Common myeloid progenitor, CD34-positive (primary cell): ENCODE measurements at regions of chr3 and their contacts with region 1.

Region 1: GRCh38 chr3:46368569-46368968 is 2.2 kb upstream of the CCR5 start:
- DNase-seq: peak; percentile 61 to 82 (median 76)
- H3K4me3 ChIP-seq: no peak overlapping the region
- H3K27ac ChIP-seq: no peak overlapping the region
- H3K4me1 ChIP-seq: peaks cover 6 to 27% (median 16%) of the 10 kb centered on the region in 4 experiments
- H3K27me3 ChIP-seq: no peaks in the 10 kb centered on the region

Region 2: GRCh38 chr3:46208167-46208704 is 160.3 kb before region 1 on chr3 and contains the start of gene CCR1:
- CTCF ChIA-PET with region 1: interaction called, 87 read pairs
- POLR2A ChIA-PET with region 1: no interaction called
- DNase-seq: peak; percentile 53 to 91 (median 90)
- H3K4me3 ChIP-seq: peak within 1 kb of the TSS in 4 of 7 experiments; percentile 11 to 49 (median 30)
- H3K27ac ChIP-seq: no peak within 1 kb of the TSS
- H3K4me1 ChIP-seq: peaks cover 14 to 34% (median 26%) of the 10 kb centered on the region in 4 experiments
- H3K27me3 ChIP-seq: no peaks in the 10 kb centered on the region

Region 3: DNA sequence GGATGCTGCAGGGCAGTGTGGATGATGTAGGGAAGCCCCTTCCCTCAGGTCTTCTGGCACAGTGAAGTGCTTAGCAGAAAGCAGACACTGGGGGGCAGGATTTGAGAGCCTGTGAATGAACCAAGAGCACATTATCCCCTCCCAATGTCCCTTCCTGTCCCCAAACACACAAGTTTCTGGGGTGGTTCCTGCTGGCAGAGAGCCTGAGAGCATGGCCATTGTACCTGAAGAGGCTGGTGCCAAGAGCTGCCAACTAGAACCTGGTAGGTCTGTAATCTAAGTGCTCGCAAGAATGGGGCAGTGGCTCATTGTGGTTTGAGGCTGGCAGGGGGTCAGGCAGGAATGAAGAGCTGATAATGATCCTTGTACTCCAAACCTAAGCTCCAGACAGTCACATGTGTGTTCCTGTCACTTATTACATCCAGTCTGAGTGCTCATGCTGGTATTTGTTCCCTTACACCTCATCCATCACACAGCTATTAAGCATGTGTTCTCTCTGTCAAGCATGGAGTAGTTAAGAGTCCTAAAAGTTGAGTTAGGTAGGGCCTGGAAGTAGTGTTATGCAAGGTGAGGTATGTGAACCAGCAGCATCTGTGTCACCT is 153.7 kb before region 1 on chr3:
- CTCF ChIA-PET with region 1: interaction called, 87 read pairs
- POLR2A ChIA-PET with region 1: no interaction called
- DNase-seq: peak; percentile 35 to 46 (median 44)
- H3K4me3 ChIP-seq: no peak overlapping the region
- H3K27ac ChIP-seq: no peak overlapping the region
- H3K4me1 ChIP-seq: peaks cover 9 to 30% (median 19%) of the 10 kb centered on the region in 4 experiments
- H3K27me3 ChIP-seq: no peaks in the 10 kb centered on the region

Region 4: GRCh38 chr3:46276502-46277099 is 92.0 kb before region 1 on chr3:
- CTCF ChIA-PET with region 1: interaction called, 14 read pairs
- POLR2A ChIA-PET with region 1: no interaction called
- DNase-seq: peak; percentile 67 to 76 (median 73)
- H3K4me3 ChIP-seq: no peak overlapping the region
- H3K27ac ChIP-seq: no peak overlapping the region
- H3K4me1 ChIP-seq: peaks cover 0 to 12% (median 3%) of the 10 kb centered on the region in 4 experiments
- H3K27me3 ChIP-seq: no peaks in the 10 kb centered on the region

Region 5: GRCh38 chr3:46293991-46294833 is 74.4 kb before region 1 on chr3:
- CTCF ChIA-PET with region 1: interaction called, 37 read pairs
- POLR2A ChIA-PET with region 1: no interaction called
- DNase-seq: no peak
- H3K4me3 ChIP-seq: no peak overlapping the region
- H3K27ac ChIP-seq: no peak overlapping the region
- H3K4me1 ChIP-seq: peaks cover 0 to 31% (median 19%) of the 10 kb centered on the region in 4 experiments
- H3K27me3 ChIP-seq: no peaks in the 10 kb centered on the region

Region 6: GRCh38 chr3:46349485-46350261 is 18.9 kb before region 1 on chr3:
- CTCF ChIA-PET with region 1: interaction called, 44 read pairs
- POLR2A ChIA-PET with region 1: no interaction called
- DNase-seq: peak; percentile 48 to 86 (median 78)
- H3K4me3 ChIP-seq: peak overlapping the region in 4 of 7 experiments; percentile 12 to 46 (median 22)
- H3K27ac ChIP-seq: no peak overlapping the region
- H3K4me1 ChIP-seq: peaks cover 24 to 57% (median 46%) of the 10 kb centered on the region in 4 experiments
- H3K27me3 ChIP-seq: no peaks in the 10 kb centered on the region

Region 7: GRCh38 chr3:46449755-46450552 is 81.4 kb after region 1 on chr3:
- CTCF ChIA-PET with region 1: interaction called, 11 read pairs
- POLR2A ChIA-PET with region 1: no interaction called
- DNase-seq: no peak
- H3K4me3 ChIP-seq: no peak overlapping the region
- H3K27ac ChIP-seq: no peak overlapping the region
- H3K4me1 ChIP-seq: peaks cover 0 to 25% (median 0%) of the 10 kb centered on the region in 4 experiments
- H3K27me3 ChIP-seq: no peaks in the 10 kb centered on the region